Psoas muscle (tissue), 8 donors: ENCODE measurements at regions of chr19 and their contacts with region 1.

Region 1: GRCh38 chr19:53103198-53103944 is at the start of gene ZNF160:
- DNase-seq: peak; percentile 99
- ATAC-seq: peak; percentile 99
- H3K4me3 ChIP-seq: peak within 1 kb of the TSS; percentile 93
- H3K27ac ChIP-seq: peak within 1 kb of the TSS; percentile 91
- H3K4me1 ChIP-seq: peaks cover 17% of the 10 kb centered on the region
- H3K27me3 ChIP-seq: no peaks in the 10 kb centered on the region
- CTCF ChIP-seq: no peak
- total RNA-seq, gene ZNF160: 7.5 to 12.4 (median 10.4) TPM

Region 2: DNA sequence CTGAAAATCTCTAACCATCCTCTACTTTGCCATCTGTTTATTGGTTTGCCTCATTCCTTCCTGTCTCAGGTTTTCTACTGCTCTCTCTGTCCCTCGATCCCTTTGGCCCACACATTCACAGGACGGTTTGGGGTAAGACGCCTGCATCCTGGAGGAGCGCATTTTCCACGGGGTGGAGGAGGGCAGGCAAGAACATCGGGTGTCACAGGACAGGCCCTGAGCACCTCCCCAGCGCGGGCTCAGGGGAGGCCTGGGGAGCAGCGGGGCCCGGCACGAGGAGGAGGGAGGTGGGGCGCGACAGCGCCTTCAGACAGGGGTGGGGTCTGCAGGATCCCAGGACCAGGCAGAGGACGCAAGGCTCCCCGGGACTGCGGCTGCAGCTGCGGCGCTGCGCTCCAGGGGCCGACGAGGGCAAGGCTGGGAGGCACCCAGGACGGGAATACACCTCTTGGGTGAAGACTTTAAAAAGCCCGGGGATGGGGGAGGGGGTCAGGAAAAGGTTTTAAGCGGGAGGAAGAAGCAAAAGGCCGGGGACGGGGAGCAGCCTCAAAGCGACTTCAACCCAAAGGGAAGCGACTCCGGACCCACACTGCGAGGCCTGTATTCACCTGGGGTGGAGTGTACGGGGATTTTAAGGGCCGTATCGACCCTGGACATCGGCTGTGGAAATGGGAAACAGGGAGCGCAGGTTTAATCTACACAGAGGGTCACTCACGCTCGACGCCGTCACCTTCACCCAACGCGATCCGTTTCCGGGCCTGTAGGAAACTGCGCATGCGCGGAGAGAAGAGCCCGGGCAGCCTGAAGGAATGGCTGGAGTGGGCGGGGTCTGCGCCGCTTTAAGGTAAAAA is 29.0 kb after region 1 on chr19 and contains the start of gene ZNF415:
- intact Hi-C with region 1: loop called in 1 of 2 experiments (anchors 2 kb)
- DNase-seq: peak; percentile 87 to 89
- ATAC-seq: peak; percentile 81 to 94 (median 90)
- H3K4me3 ChIP-seq: peak within 1 kb of the TSS; percentile 78
- H3K27ac ChIP-seq: peak within 1 kb of the TSS; percentile 88
- H3K4me1 ChIP-seq: peaks cover 5% of the 10 kb centered on the region
- H3K27me3 ChIP-seq: no peaks in the 10 kb centered on the region
- CTCF ChIP-seq: no peak
- total RNA-seq, gene ZNF415: 3.9 to 9.2 (median 6.3) TPM

Region 3: GRCh38 chr19:53147645-53148044 is 44.3 kb after region 1 on chr19:
- intact Hi-C with region 1: no loop called
- DNase-seq: no peak
- ATAC-seq: no peak
- H3K4me3 ChIP-seq: no peak overlapping the region
- H3K27ac ChIP-seq: no peak overlapping the region
- H3K4me1 ChIP-seq: no peaks in the 10 kb centered on the region
- H3K27me3 ChIP-seq: no peaks in the 10 kb centered on the region
- CTCF ChIP-seq: no peak

Region 4: DNA sequence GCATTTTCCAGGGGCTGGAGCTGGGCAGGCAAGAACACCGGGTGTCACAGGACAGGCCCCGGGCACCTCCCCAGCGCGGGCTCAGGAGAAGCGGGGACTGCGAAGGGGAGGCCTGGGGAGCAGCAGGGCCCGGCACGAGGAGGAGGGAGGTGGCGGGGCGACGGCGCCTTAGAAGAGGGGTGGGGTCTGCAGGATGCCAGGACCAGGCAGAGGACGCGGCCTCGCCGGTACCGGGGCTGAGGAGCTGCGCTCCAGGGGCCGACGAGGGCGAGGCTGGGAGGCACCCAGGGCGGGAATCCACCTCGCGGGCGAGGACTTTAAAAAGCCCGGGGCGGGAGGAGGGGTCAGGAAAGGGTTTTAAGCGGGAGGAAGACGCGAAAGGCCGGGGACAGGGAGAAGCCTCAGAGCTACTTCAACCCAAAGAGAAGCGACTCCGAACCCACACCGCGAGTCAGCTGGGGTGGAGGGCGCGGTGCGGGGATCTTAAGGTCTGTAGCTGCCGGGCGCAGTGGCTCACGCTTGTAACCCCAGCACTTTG is 54.8 kb after region 1 on chr19:
- intact Hi-C with region 1: loop called (anchors 2 to 5 kb)
- DNase-seq: peak; percentile 38 to 63
- ATAC-seq: peak; percentile 30 to 50 (median 41)
- H3K4me3 ChIP-seq: peak overlapping the region; percentile 78
- H3K27ac ChIP-seq: peak overlapping the region; percentile 70
- H3K4me1 ChIP-seq: no peaks in the 10 kb centered on the region
- H3K27me3 ChIP-seq: no peaks in the 10 kb centered on the region
- CTCF ChIP-seq: no peak

Region 5: DNA sequence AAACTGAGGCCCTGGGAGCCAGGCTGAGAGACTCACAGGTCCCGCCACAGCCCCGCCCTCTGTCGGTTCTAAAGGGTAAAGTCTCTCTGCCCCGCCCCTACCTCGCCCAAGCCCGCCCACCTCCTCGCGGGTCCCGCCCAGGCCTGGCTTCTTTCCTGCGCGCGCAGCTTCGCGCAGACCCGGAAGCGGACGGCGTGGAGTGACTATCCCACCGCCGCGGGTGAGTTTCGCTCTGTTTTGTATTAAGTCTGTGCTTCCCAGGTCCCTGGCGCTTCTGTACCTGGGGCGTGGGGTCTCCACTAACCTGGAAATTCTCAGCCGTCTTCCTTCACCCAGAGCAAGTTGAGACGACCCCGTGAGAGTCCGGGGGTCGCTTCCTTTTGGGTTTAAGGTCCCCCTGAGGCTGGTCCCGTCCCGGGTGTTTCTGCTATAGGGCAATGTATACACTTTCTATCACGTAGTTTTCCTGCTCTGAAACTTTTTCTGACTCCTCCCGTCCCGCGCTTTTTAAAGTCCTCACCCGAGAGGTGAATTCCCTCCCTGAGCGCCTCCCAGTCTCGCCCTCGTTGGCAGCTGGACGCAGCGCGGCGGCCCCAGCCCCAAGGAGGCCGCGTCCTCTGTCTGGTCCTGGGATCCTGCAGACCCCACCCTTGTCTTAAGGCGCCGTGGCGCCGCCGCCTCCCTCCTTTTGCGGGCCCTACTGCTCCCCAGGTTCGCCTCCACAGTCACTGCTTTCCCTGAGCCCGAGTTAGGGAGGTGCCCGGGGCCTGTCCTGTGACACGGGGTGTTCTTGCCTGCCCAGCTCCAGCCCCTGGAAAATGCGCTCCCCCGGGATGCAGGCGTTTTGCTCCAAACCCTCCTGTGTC is 291.8 kb after region 1 on chr19 and contains the start of gene ZNF765:
- intact Hi-C with region 1: loop called in 1 of 2 experiments (anchors 10 kb)
- DNase-seq: peak; percentile 94 to 96
- ATAC-seq: peak; percentile 100
- H3K4me3 ChIP-seq: peak within 1 kb of the TSS; percentile 87
- H3K27ac ChIP-seq: peak within 1 kb of the TSS; percentile 57
- H3K4me1 ChIP-seq: peaks cover 5% of the 10 kb centered on the region
- H3K27me3 ChIP-seq: no peaks in the 10 kb centered on the region
- CTCF ChIP-seq: peak; percentile 43
- total RNA-seq, gene ZNF765: 1.8 to 2.9 (median 2.6) TPM